ENCODE measurements at regions of chr13 and their contacts with region 1.

Region 1: GRCh38 chr13:46387064-46387851 is at the start of gene RUBCNL:
- DNase-seq: peak; percentile 79 to 80
- H3K4me3 ChIP-seq: peak within 1 kb of the TSS; percentile 53
- H3K4me3 Mint-ChIP-seq: peak within 1 kb of the TSS; percentile 85
- H3K27ac Mint-ChIP-seq: peak within 1 kb of the TSS; percentile 68
- H3K4me1 ChIP-seq: peaks cover 28% of the 10 kb centered on the region
- H3K4me1 Mint-ChIP-seq: peaks cover 29% of the 10 kb centered on the region
- H3K27me3 ChIP-seq: no peaks in the 10 kb centered on the region
- H3K27me3 Mint-ChIP-seq: no peaks in the 10 kb centered on the region
- CTCF ChIP-seq: peak in 1 of 2 experiments; percentile 10
- total RNA-seq, gene RUBCNL: 14.0 and 16.0 TPM in 2 replicates

Region 2: DNA sequence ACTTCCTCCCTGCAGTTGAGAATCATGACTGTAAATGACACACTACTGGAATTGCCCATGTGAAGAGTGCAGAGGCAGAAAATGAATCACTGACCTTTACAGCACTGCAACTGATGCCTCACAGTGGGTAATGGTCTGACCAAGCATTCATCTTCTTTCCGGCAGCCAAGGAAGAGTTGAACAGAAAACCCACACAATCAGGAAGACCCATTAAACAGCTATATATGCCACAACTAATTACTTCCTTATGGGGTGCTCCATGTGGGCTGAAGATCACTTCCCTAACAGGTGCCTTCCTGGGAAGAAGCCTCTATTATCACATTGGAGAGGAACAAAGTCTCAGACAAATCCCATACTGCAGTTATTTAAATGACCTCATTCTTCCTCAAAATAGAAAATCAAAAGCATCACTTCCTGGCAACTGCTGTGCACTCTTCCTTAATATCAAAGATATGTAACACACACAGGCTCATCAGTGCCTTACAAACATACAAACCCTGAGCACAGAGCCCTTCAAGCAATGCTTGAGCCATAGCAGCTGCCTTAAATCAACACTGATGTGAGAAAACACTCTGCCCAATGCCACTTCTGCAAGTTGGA is 46.0 kb before region 1 on chr13:
- CTCF ChIA-PET with region 1: no interaction called
- POLR2A ChIA-PET with region 1: no interaction called
- intact Hi-C with region 1: no loop called
- DNase-seq: no peak
- H3K4me3 ChIP-seq: no peak overlapping the region
- H3K4me3 Mint-ChIP-seq: no peak overlapping the region
- H3K27ac Mint-ChIP-seq: no peak overlapping the region
- H3K4me1 ChIP-seq: peaks cover 17% of the 10 kb centered on the region
- H3K4me1 Mint-ChIP-seq: peaks cover 11% of the 10 kb centered on the region
- H3K27me3 ChIP-seq: no peaks in the 10 kb centered on the region
- H3K27me3 Mint-ChIP-seq: no peaks in the 10 kb centered on the region
- CTCF ChIP-seq: no peak

Region 3: GRCh38 chr13:46473798-46474197 is 86.5 kb after region 1 on chr13:
- CTCF ChIA-PET with region 1: interaction called, 4 read pairs
- POLR2A ChIA-PET with region 1: no interaction called
- intact Hi-C with region 1: loop called (anchors 2 kb)
- DNase-seq: peak; percentile 60 to 81
- H3K4me3 ChIP-seq: no peak overlapping the region
- H3K4me3 Mint-ChIP-seq: peak overlapping the region; percentile 52
- H3K27ac Mint-ChIP-seq: peak overlapping the region; percentile 80
- H3K4me1 ChIP-seq: peaks cover 38% of the 10 kb centered on the region
- H3K4me1 Mint-ChIP-seq: peaks cover 23% of the 10 kb centered on the region
- H3K27me3 ChIP-seq: no peaks in the 10 kb centered on the region
- H3K27me3 Mint-ChIP-seq: no peaks in the 10 kb centered on the region
- CTCF ChIP-seq: no peak

Measured in Caco-2 (cell line).